CD14-positive monocyte (primary cell): ENCODE measurements at regions of chr7 and their contacts with region 1.

Region 1: DNA sequence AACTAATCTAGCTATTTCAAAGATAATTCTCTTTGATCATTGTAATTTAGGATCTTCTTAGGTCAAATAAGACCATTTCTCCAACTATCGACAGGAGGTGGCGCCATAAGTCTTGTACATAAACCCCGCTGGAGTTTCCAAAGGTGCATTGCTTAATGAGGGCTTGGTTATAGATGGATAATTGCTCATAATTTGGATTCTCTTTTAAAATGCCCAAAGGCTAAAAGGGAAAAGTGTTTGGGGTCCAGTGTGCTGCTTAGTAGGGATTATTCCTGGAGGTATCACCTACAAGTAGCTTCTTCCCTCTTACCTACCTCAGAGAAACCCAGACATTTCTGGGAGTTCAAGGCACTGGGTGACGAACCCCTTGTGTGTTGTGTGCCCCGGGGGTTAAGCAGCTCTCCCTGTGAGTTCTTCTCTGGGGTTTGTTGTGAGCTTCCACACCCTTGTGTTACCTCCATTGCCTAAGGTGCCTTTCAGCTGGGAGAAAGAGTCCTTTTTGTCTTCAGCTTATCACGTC is 75.2 kb downstream of the PAXIP1 start:
- DNase-seq: peak; percentile 76 to 91 (median 90)
- H3K4me3 ChIP-seq: peak overlapping the region; percentile 65 to 99 (median 84)
- H3K4me3 Mint-ChIP-seq: peak overlapping the region; percentile 91 to 94
- H3K27ac ChIP-seq: peak overlapping the region; percentile 72 to 95
- H3K27ac Mint-ChIP-seq: peak overlapping the region; percentile 96 to 99 (median 99)
- H3K4me1 ChIP-seq: peaks cover 11 to 12% of the 10 kb centered on the region in 2 donors
- H3K4me1 Mint-ChIP-seq: peaks cover 21% of the 10 kb centered on the region
- H3K27me3 ChIP-seq: peaks cover 0 to 4% of the 10 kb centered on the region in 2 donors
- H3K27me3 Mint-ChIP-seq: peaks cover under 1 to 4% (median 2%) of the 10 kb centered on the region in 3 donors
- CTCF ChIP-seq: peak; percentile 85

Region 2: DNA sequence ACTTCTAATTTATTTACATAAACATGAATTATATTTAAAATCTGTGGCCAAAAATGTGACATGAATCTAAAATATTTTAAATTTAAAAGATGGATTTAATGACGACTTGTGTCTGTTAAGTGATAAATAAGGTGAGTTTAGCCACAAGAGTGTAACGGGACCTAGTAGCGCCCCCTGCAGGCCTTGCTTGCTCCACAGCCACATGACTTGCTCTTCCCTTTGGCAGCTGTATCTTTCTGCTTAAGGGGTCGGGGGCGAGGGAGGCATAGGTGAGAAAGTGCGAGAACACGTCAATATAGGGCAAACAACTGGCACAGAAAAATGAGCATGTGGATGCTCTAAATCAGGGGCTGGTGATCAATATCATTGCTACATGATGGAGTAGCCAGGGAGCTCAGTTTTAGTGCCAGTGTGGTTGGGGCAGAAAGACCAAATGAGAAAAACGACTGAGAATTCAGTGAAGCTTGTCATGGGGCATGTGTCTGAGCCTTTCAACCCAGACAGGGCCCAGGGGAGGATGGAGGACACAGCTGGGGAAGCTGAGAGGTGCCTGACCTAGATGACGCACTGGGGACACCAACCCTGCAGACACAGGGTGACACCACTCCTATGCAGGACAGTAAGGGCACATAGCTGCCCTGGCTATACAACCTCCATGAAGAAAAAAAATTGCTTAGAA is 25.5 kb after region 1 on chr7:
- intact Hi-C with region 1: loop called in 1 of 2 experiments (anchors 2 kb)
- DNase-seq: peak; percentile 33 to 65 (median 60)
- H3K4me3 ChIP-seq: no peak overlapping the region
- H3K4me3 Mint-ChIP-seq: no peak overlapping the region
- H3K27ac ChIP-seq: no peak overlapping the region
- H3K27ac Mint-ChIP-seq: peak overlapping the region in 3 of 7 donors; percentile 27 to 64 (median 55)
- H3K4me1 ChIP-seq: no peaks in the 10 kb centered on the region
- H3K4me1 Mint-ChIP-seq: no peaks in the 10 kb centered on the region
- H3K27me3 ChIP-seq: no peaks in the 10 kb centered on the region
- H3K27me3 Mint-ChIP-seq: no peaks in the 10 kb centered on the region
- CTCF ChIP-seq: peak; percentile 81

Region 3: GRCh38 chr7:155205368-155206317 is 278.0 kb after region 1 on chr7:
- intact Hi-C with region 1: loop called in 1 of 2 experiments (anchors 5 kb)
- DNase-seq: peak; percentile 97 to 100 (median 98)
- H3K4me3 ChIP-seq: peak overlapping the region; percentile 30 to 64 (median 31)
- H3K4me3 Mint-ChIP-seq: peak overlapping the region; percentile 74 to 94
- H3K27ac ChIP-seq: peak overlapping the region; percentile 86 to 100
- H3K27ac Mint-ChIP-seq: peak overlapping the region; percentile 100
- H3K4me1 ChIP-seq: peaks cover 22 to 23% of the 10 kb centered on the region in 2 donors
- H3K4me1 Mint-ChIP-seq: peaks cover 22% of the 10 kb centered on the region
- H3K27me3 ChIP-seq: no peaks in the 10 kb centered on the region
- H3K27me3 Mint-ChIP-seq: peaks cover 0 to 9% (median 0%) of the 10 kb centered on the region in 3 donors
- CTCF ChIP-seq: no peak

Region 4: GRCh38 chr7:155344600-155345433 is 417.1 kb after region 1 on chr7:
- intact Hi-C with region 1: loop called (anchors 5 to 10 kb)
- DNase-seq: peak; percentile 49 to 72 (median 63)
- H3K4me3 ChIP-seq: peak overlapping the region in 1 of 3 experiments; percentile 62
- H3K4me3 Mint-ChIP-seq: peak overlapping the region; percentile 65 to 87
- H3K27ac ChIP-seq: no peak overlapping the region
- H3K27ac Mint-ChIP-seq: peak overlapping the region in 2 of 7 donors; percentile 12 to 47
- H3K4me1 ChIP-seq: peaks cover 9 to 11% of the 10 kb centered on the region in 2 donors
- H3K4me1 Mint-ChIP-seq: peaks cover 4% of the 10 kb centered on the region
- H3K27me3 ChIP-seq: peaks cover 0 to 19% of the 10 kb centered on the region in 2 donors
- H3K27me3 Mint-ChIP-seq: peaks cover under 1 to 19% (median 9%) of the 10 kb centered on the region in 3 donors
- CTCF ChIP-seq: peak; percentile 93

Region 5: GRCh38 chr7:155738652-155739537 is 811.2 kb after region 1 on chr7:
- intact Hi-C with region 1: loop called in 1 of 2 experiments (anchors 10 kb)
- DNase-seq: peak; percentile 24 to 43 (median 25)
- H3K4me3 ChIP-seq: no peak overlapping the region
- H3K4me3 Mint-ChIP-seq: no peak overlapping the region
- H3K27ac ChIP-seq: no peak overlapping the region
- H3K27ac Mint-ChIP-seq: peak overlapping the region in 1 of 7 donors; percentile 6
- H3K4me1 ChIP-seq: no peaks in the 10 kb centered on the region
- H3K4me1 Mint-ChIP-seq: peaks cover 6% of the 10 kb centered on the region
- H3K27me3 ChIP-seq: no peaks in the 10 kb centered on the region
- H3K27me3 Mint-ChIP-seq: no peaks in the 10 kb centered on the region
- CTCF ChIP-seq: peak; percentile 47

Region 6: GRCh38 chr7:156892821-156893706 is 1965.4 kb after region 1 on chr7 and contains the start of gene LMBR1:
- intact Hi-C with region 1: loop called in 1 of 2 experiments (anchors 10 kb)
- DNase-seq: peak; percentile 91 to 95 (median 94)
- H3K4me3 ChIP-seq: peak within 1 kb of the TSS; percentile 58 to 85 (median 78)
- H3K4me3 Mint-ChIP-seq: peak within 1 kb of the TSS; percentile 88 to 92
- H3K27ac ChIP-seq: peak within 1 kb of the TSS; percentile 85 to 92
- H3K27ac Mint-ChIP-seq: peak within 1 kb of the TSS; percentile 88 to 95 (median 93)
- H3K4me1 ChIP-seq: peaks cover 41 to 47% of the 10 kb centered on the region in 2 donors
- H3K4me1 Mint-ChIP-seq: peaks cover 49% of the 10 kb centered on the region
- H3K27me3 ChIP-seq: no peaks in the 10 kb centered on the region
- H3K27me3 Mint-ChIP-seq: peaks cover 0 to under 1% (median 0%) of the 10 kb centered on the region in 3 donors
- CTCF ChIP-seq: peak; percentile 80
- polyA plus RNA-seq, gene LMBR1: 14.8 to 24.4 (median 21.2) TPM